ENCODE measurements at regions of chr7 and their contacts with region 1.

Region 1: DNA sequence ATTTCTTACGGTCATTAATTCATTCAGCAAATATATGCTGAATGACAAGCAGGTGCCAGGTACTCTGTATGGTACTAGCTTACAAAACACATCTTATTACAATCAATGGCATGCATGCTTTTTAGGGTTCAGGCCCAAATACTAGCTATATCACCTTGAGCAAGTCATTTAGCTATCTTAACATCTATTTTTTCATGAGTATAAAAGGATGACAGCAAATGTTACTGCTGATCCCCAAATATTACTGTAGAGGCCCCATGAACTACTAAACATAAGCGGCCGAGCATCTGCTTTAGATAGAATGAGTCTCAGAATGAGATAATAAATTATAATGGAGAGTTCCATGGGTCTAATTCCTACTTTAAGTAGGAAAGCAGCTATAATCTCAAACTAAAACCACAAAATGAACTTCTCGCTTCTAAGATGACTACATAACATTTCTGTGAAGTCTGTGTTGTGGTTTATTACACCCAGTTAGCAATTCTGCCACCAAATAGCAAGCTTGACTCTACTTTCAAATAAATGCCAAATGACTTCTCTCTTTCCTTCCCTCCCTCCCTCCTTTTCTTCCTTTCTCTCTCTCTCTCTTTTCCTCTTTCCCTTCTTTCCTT is 113.7 kb upstream of the LRRN3 start:
- DNase-seq: no peak
- H3K4me3 Mint-ChIP-seq: no peak overlapping the region
- H3K27ac Mint-ChIP-seq: peak overlapping the region; percentile 24
- H3K4me1 Mint-ChIP-seq: peaks cover 37% of the 10 kb centered on the region
- H3K27me3 Mint-ChIP-seq: no peaks in the 10 kb centered on the region

Region 2: GRCh38 chr7:110386914-110387313 is 590.3 kb before region 1 on chr7:
- intact Hi-C with region 1: no loop called
- DNase-seq: no peak
- H3K4me3 Mint-ChIP-seq: no peak overlapping the region
- H3K27ac Mint-ChIP-seq: no peak overlapping the region
- H3K4me1 Mint-ChIP-seq: no peaks in the 10 kb centered on the region
- H3K27me3 Mint-ChIP-seq: peaks cover 2% of the 10 kb centered on the region

Region 3: GRCh38 chr7:110541962-110542361 is 435.3 kb before region 1 on chr7:
- intact Hi-C with region 1: no loop called
- DNase-seq: no peak
- H3K4me3 Mint-ChIP-seq: no peak overlapping the region
- H3K27ac Mint-ChIP-seq: no peak overlapping the region
- H3K4me1 Mint-ChIP-seq: no peaks in the 10 kb centered on the region
- H3K27me3 Mint-ChIP-seq: no peaks in the 10 kb centered on the region

Region 4: DNA sequence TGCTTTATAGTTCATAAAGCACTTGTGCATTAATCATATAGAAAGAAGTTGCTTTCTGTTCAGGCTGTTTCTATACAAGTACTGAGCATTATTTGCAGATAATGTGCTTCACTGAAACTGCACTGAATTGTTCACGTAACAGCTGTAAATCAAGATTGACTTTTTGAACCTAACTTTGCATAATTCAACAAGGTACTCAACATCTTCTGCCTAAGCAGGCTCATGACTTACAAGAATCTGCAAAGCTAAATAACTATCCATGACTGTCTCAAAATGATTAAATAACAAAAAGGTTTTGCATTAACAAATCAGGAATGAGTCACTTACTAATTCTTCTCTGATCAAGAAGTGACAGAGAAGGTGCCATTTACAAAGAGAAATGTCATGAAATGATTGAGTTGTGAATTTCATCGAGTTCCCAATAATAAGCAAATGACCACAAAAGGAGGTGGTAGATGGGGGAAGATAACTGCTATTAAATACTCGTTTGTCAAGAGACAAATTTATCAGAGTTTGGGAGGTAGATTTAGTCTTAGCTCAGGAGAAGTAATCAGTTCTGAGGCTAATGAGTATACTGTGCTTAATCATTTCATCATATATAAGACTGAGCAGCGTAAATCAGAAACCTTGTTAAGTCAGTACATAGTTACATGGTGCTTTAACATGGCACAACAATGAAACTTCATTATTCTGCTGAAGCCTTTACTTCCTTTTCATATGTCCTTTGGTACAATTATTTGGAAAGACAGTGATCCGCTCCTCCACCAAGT is 47.6 kb before region 1 on chr7:
- intact Hi-C with region 1: loop called (anchors 5 kb)
- DNase-seq: no peak
- H3K4me3 Mint-ChIP-seq: no peak overlapping the region
- H3K27ac Mint-ChIP-seq: no peak overlapping the region
- H3K4me1 Mint-ChIP-seq: peaks cover 18% of the 10 kb centered on the region
- H3K27me3 Mint-ChIP-seq: no peaks in the 10 kb centered on the region

Region 5: GRCh38 chr7:111006691-111007090 is 29.5 kb after region 1 on chr7:
- intact Hi-C with region 1: loop called (anchors 2 kb)
- DNase-seq: no peak
- H3K4me3 Mint-ChIP-seq: no peak overlapping the region
- H3K27ac Mint-ChIP-seq: no peak overlapping the region
- H3K4me1 Mint-ChIP-seq: peaks cover 36% of the 10 kb centered on the region
- H3K27me3 Mint-ChIP-seq: no peaks in the 10 kb centered on the region